ENCODE measurements at regions of chr12 and their contacts with region 1.

Region 1: GRCh38 chr12:112096667-112097066 is 11.9 kb downstream of the NAA25 start:
- DNase-seq: peak; percentile 54
- H3K4me3 Mint-ChIP-seq: peak overlapping the region; percentile 42
- H3K27ac Mint-ChIP-seq: peak overlapping the region; percentile 96
- H3K4me1 Mint-ChIP-seq: peaks cover 47% of the 10 kb centered on the region
- H3K27me3 Mint-ChIP-seq: no peaks in the 10 kb centered on the region

Region 2: DNA sequence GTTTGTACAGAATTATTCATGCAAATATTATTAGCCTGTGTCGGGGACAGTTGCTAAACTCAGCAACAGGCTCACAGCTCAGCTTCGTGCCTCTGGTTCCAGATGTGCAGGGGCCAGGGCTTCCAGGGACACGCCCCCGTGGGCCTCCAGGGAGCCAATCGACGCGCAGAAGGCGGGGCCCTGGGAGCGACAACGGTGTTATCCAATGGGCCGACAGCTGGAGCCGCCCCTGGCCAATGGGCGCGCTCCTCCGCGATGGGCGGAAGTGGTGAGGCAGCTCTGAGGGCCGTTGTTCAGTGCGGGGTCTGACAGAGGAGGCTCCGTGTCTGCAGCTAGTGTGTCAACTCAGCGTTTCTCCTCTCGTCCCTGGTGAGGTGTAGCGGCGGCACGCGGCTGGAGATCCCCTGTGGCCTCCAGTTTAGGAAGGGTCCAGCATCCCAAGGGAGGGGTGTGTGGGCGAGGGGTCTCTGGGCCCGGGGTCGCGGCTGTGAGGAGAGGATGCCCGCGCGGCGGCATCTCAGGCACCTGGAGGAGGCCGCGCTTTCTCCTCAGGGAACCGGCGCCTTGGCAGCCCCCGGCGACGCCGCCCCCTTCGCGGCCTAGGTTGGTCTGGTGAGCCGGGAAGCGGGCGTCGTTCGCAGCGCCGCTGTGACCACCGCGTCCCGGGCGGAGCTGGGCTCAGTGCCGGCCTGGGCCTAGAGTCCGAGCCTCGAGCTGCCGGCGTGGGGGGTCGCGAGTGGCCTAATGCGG is 28.8 kb after region 1 on chr12 and contains the start of gene TRAFD1:
- CTCF ChIA-PET with region 1: interaction called, 3 read pairs
- POLR2A ChIA-PET with region 1: interaction called, 15 read pairs
- intact Hi-C with region 1: loop called (anchors 1 kb)
- DNase-seq: peak; percentile 99
- H3K4me3 Mint-ChIP-seq: peak within 1 kb of the TSS; percentile 87
- H3K27ac Mint-ChIP-seq: peak within 1 kb of the TSS; percentile 87
- H3K4me1 Mint-ChIP-seq: peaks cover 36% of the 10 kb centered on the region
- H3K27me3 Mint-ChIP-seq: peaks cover 1% of the 10 kb centered on the region
- total RNA-seq, gene TRAFD1: 56.4 to 61.8 TPM

Region 3: GRCh38 chr12:112130441-112130998 is 33.9 kb after region 1 on chr12:
- CTCF ChIA-PET with region 1: interaction called, 3 read pairs
- POLR2A ChIA-PET with region 1: interaction called, 15 read pairs
- intact Hi-C with region 1: loop called (anchors 1 kb)
- DNase-seq: no peak
- H3K4me3 Mint-ChIP-seq: peak overlapping the region; percentile 55
- H3K27ac Mint-ChIP-seq: peak overlapping the region; percentile 76
- H3K4me1 Mint-ChIP-seq: peaks cover 56% of the 10 kb centered on the region
- H3K27me3 Mint-ChIP-seq: no peaks in the 10 kb centered on the region

Region 4: GRCh38 chr12:112183141-112184021 is 86.7 kb after region 1 on chr12:
- CTCF ChIA-PET with region 1: no interaction called
- POLR2A ChIA-PET with region 1: no interaction called
- intact Hi-C with region 1: loop called (anchors 2 kb)
- DNase-seq: peak; percentile 69
- H3K4me3 Mint-ChIP-seq: no peak overlapping the region
- H3K27ac Mint-ChIP-seq: peak overlapping the region; percentile 46
- H3K4me1 Mint-ChIP-seq: peaks cover 20% of the 10 kb centered on the region
- H3K27me3 Mint-ChIP-seq: no peaks in the 10 kb centered on the region

Region 5: GRCh38 chr12:112850383-112850782 is 753.7 kb after region 1 on chr12:
- CTCF ChIA-PET with region 1: no interaction called
- POLR2A ChIA-PET with region 1: no interaction called
- intact Hi-C with region 1: no loop called
- DNase-seq: no peak
- H3K4me3 Mint-ChIP-seq: no peak overlapping the region
- H3K27ac Mint-ChIP-seq: no peak overlapping the region
- H3K4me1 Mint-ChIP-seq: no peaks in the 10 kb centered on the region
- H3K27me3 Mint-ChIP-seq: peaks cover 16% of the 10 kb centered on the region

Measured in activated CD4-positive, alpha-beta memory T cell treated with anti-CD3 and anti-CD28 coated beads for 36 hours (primary cell).